Mucosa of descending colon (tissue), 3 donors: ENCODE measurements at regions of chr6 and their contacts with region 1.

Region 1: GRCh38 chr6:56708810-56709597 is 66.3 kb upstream of the DST start:
- DNase-seq: no peak
- ATAC-seq: peak; percentile 43
- H3K4me3 ChIP-seq: no peak overlapping the region
- H3K4me1 ChIP-seq: no peaks in the 10 kb centered on the region
- CTCF ChIP-seq: peak; percentile 25

Region 2: GRCh38 chr6:56757588-56757984 is 48.6 kb after region 1 on chr6:
- intact Hi-C with region 1: loop called (anchors 2 to 5 kb)
- DNase-seq: peak in 1 of 3 donors; percentile 82
- ATAC-seq: peak; percentile 82
- H3K4me3 ChIP-seq: no peak overlapping the region
- H3K4me1 ChIP-seq: peaks cover 3% of the 10 kb centered on the region
- CTCF ChIP-seq: peak; percentile 19

Region 3: DNA sequence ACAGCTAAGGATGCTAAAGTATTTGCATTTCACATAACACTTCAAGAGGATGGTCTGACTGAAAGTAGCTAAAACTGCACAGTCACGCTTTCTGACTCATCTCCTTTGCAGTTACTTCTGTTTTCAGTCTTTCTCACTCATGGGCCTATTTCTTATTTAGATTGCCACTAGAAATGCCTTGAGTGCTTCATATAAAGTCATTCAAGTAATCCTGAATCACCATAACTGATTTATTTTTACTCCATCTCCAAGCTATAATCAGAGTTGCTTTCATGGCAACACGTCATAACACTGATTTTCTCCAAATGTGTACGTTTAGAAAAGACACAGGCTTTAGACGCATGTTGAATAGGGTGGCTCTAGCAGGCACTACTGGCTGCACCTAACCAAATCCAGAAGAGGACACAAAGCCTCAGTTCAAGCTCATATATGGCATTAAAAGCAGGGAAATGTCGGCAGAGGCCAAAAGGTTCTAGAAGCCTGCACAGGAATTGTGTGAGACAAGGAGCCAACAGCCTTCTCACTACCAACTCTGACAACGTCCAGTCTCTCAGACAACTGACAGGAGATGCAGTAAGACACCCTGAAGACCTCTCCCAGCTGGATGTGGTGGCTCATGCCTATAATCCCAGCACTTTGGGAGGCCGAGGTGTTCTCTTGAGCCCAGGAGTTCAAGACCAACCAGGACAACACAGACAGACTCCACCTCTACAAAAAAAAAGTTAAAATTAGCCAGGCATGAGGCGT is 181.9 kb after region 1 on chr6:
- intact Hi-C with region 1: no loop called
- DNase-seq: peak in 1 of 3 donors; percentile 30
- ATAC-seq: peak; percentile 45
- H3K4me3 ChIP-seq: no peak overlapping the region
- H3K4me1 ChIP-seq: no peaks in the 10 kb centered on the region
- CTCF ChIP-seq: no peak